ENCODE measurements at regions of chr12 and their contacts with region 1.

Region 1: GRCh38 chr12:53508534-53509199 is 1.4 kb upstream of the NPFF start:
- DNase-seq: peak; percentile 72 to 90 (median 82)
- ATAC-seq: peak; percentile 98
- H3K4me3 ChIP-seq: no peak overlapping the region
- H3K27ac ChIP-seq: 0 out of 3 replicates have a peak overlapping the region, but pooled peaks have one; percentile 14
- H3K4me1 ChIP-seq: peaks cover 4 to 7% of the 10 kb centered on the region in 2 experiments; a peak in 4 of 5 replicates
- H3K27me3 ChIP-seq: no peaks in the 10 kb centered on the region; a peak in 1 of 5 replicates
- CTCF ChIP-seq: peak; percentile 94 to 98 (median 95)
- EP300 ChIP-seq: no peak
- POLR2A ChIP-seq: no peak
- RAD21 ChIP-seq: peak; percentile 94 to 96

Region 2: DNA sequence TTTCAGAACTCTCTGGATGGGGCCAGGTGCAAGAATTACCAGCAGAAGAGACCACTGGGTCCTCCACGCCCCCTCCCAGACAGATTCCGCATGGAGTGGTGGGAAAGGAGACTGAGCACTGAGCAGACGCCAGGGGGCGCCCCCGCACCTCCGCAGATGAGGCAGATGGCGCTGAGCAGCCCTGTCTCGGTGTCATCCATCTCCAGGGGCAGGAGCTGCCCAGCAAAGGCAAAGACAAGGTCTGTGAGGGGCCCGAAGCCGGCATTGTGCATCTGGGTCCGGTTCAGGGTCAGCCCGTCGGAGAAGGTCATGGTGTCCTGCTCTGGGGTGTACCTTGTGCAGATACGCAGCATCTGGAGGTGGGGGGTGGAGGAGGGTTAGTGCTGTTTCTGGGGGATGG is 295.3 kb before region 1 on chr12:
- CTCF ChIA-PET with region 1: interaction called, 4 read pairs
- POLR2A ChIA-PET with region 1: no interaction called
- in situ Hi-C with region 1: no loop called
- intact Hi-C with region 1: loop called (anchors 2 kb)
- DNase-seq: peak; percentile 79 to 87 (median 83)
- ATAC-seq: peak; percentile 94
- H3K4me3 ChIP-seq: no peak overlapping the region
- H3K27ac ChIP-seq: no peak overlapping the region
- H3K4me1 ChIP-seq: peaks cover 20 to 38% of the 10 kb centered on the region in 2 experiments
- H3K27me3 ChIP-seq: no peaks in the 10 kb centered on the region
- CTCF ChIP-seq: peak; percentile 96 to 97 (median 97)
- EP300 ChIP-seq: no peak
- POLR2A ChIP-seq: no peak
- RAD21 ChIP-seq: peak; percentile 98 to 99

Region 3: GRCh38 chr12:53352331-53353256 is 156.1 kb before region 1 on chr12:
- CTCF ChIA-PET with region 1: interaction called, 21 read pairs
- POLR2A ChIA-PET with region 1: interaction called, 3 read pairs
- in situ Hi-C with region 1: no loop called
- intact Hi-C with region 1: loop called (anchors 1 kb)
- DNase-seq: peak; percentile 71 to 93 (median 74)
- ATAC-seq: peak; percentile 95
- H3K4me3 ChIP-seq: no peak overlapping the region
- H3K27ac ChIP-seq: no peak overlapping the region
- H3K4me1 ChIP-seq: peaks cover 12 to 17% of the 10 kb centered on the region in 2 experiments
- H3K27me3 ChIP-seq: no peaks in the 10 kb centered on the region
- CTCF ChIP-seq: peak; percentile 91 to 96 (median 92)
- EP300 ChIP-seq: no peak
- POLR2A ChIP-seq: no peak
- RAD21 ChIP-seq: peak; percentile 98 to 99

Region 4: GRCh38 chr12:53427905-53428594 is 80.6 kb before region 1 on chr12:
- CTCF ChIA-PET with region 1: no interaction called
- POLR2A ChIA-PET with region 1: no interaction called
- in situ Hi-C with region 1: no loop called
- intact Hi-C with region 1: loop called (anchors 5 kb)
- DNase-seq: peak in 2 of 4 experiments; percentile 15 to 38
- ATAC-seq: no peak
- H3K4me3 ChIP-seq: no peak overlapping the region
- H3K27ac ChIP-seq: no peak overlapping the region
- H3K4me1 ChIP-seq: peaks cover 30 to 31% of the 10 kb centered on the region in 2 experiments
- H3K27me3 ChIP-seq: no peaks in the 10 kb centered on the region
- CTCF ChIP-seq: no peak
- EP300 ChIP-seq: no peak
- POLR2A ChIP-seq: no peak
- RAD21 ChIP-seq: no peak

Region 5: GRCh38 chr12:53712059-53712643 is 203.5 kb after region 1 on chr12:
- CTCF ChIA-PET with region 1: no interaction called
- POLR2A ChIA-PET with region 1: no interaction called
- in situ Hi-C with region 1: no loop called
- intact Hi-C with region 1: no loop called
- DNase-seq: no peak
- ATAC-seq: no peak
- H3K4me3 ChIP-seq: no peak overlapping the region
- H3K27ac ChIP-seq: no peak overlapping the region
- H3K4me1 ChIP-seq: no peaks in the 10 kb centered on the region
- H3K27me3 ChIP-seq: peaks cover 26 to 73% of the 10 kb centered on the region in 2 experiments
- CTCF ChIP-seq: no peak
- EP300 ChIP-seq: no peak
- POLR2A ChIP-seq: no peak
- RAD21 ChIP-seq: no peak

Measured in K562 (cell line).